ENCODE measurements at regions of chr2 and their contacts with region 1.

Region 1: GRCh38 chr2:40844353-40845277 is 392.7 kb upstream of the SLC8A1 start:
- DNase-seq: peak; percentile 37
- H3K4me3 ChIP-seq: no peak overlapping the region
- H3K27ac ChIP-seq: no peak overlapping the region
- H3K4me1 ChIP-seq: no peaks in the 10 kb centered on the region
- H3K27me3 ChIP-seq: peaks cover 3% of the 10 kb centered on the region
- CTCF ChIP-seq: peak; percentile 46; the same call in 1 of the 2 replicates

Region 2: GRCh38 chr2:39492095-39492590 is 1352.5 kb before region 1 on chr2:
- CTCF ChIA-PET with region 1: no interaction called
- POLR2A ChIA-PET with region 1: no interaction called
- intact Hi-C with region 1: no loop called
- DNase-seq: peak; percentile 32
- H3K4me3 ChIP-seq: no peak overlapping the region
- H3K27ac ChIP-seq: no peak overlapping the region
- H3K4me1 ChIP-seq: peaks cover 11% of the 10 kb centered on the region
- H3K27me3 ChIP-seq: no peaks in the 10 kb centered on the region
- CTCF ChIP-seq: no peak

Region 3: DNA sequence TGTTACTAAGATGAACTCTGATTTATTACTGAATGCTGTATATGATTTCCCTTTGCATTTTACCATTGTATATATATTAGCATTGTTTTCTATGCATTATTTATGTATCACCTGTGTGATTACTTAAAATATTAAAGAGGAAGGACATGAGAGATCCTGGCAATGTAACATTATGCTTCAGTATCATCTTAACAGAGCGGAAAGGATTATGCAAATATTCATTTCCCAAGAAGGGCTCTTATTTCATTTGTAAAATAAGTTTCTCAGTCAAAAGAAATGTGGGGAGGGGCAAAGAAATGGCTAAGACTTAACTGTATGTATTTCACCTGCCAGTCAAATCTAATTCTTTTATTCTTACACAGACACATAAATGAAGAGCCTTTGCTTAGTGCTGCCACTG is 549.0 kb after region 1 on chr2:
- CTCF ChIA-PET with region 1: no interaction called
- POLR2A ChIA-PET with region 1: no interaction called
- intact Hi-C with region 1: loop called (anchors 10 kb)
- DNase-seq: peak; percentile 49
- H3K4me3 ChIP-seq: no peak overlapping the region
- H3K27ac ChIP-seq: no peak overlapping the region
- H3K4me1 ChIP-seq: peaks cover 11% of the 10 kb centered on the region
- H3K27me3 ChIP-seq: peaks cover 6% of the 10 kb centered on the region
- CTCF ChIP-seq: no peak

Measured in A673 (cell line).